Calu3 (cell line): ENCODE measurements at regions of chr5 and their contacts with region 1.

Region 1: DNA sequence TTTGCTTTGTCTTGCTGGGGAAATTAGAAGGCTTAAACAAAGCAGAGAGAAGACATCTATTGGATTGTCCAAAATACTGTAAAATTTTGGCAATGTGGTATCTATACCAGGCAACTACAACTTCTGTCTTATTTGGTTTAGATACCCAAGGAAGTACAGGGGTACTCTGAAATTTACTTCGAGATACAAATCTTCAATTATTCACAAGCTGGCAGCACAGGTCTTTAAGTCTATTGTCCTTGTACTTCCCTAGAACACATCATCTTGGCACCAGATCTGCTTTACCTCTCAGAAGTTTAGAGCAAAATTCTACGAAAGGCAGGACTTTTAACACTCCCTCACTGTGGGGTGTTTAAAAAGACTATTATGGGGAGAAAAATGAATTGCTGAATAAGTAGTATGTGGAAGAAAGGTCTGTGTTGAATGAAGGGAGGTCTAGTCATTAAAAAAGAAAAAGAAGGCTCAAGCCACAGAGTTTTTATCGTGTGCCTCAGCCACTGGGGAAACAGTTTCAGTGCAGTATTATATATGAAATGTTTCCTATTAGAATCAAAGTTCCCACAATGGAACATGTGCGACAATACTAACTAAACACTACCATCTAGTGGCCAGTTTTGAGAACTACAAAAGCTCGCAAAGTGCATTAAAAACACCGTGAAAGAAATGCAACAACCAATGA is 93.7 kb downstream of the PDE4D start:
- DNase-seq: peak; percentile 46
- H3K4me3 Mint-ChIP-seq: no peak overlapping the region
- H3K27ac Mint-ChIP-seq: no peak overlapping the region
- H3K4me1 Mint-ChIP-seq: no peaks in the 10 kb centered on the region
- H3K27me3 Mint-ChIP-seq: no peaks in the 10 kb centered on the region
- CTCF ChIP-seq: peak; percentile 72

Region 2: GRCh38 chr5:59193616-59194319 is 606.0 kb before region 1 on chr5:
- CTCF ChIA-PET with region 1: interaction called, 3 read pairs
- intact Hi-C with region 1: loop called (anchors 5 kb)
- DNase-seq: peak; percentile 58
- H3K4me3 Mint-ChIP-seq: no peak overlapping the region
- H3K27ac Mint-ChIP-seq: peak overlapping the region; percentile 78
- H3K4me1 Mint-ChIP-seq: peaks cover 12% of the 10 kb centered on the region
- H3K27me3 Mint-ChIP-seq: no peaks in the 10 kb centered on the region
- CTCF ChIP-seq: no peak

Region 3: GRCh38 chr5:59506285-59506877 is 293.4 kb before region 1 on chr5:
- CTCF ChIA-PET with region 1: no interaction called
- intact Hi-C with region 1: loop called (anchors 1 kb)
- DNase-seq: no peak
- H3K4me3 Mint-ChIP-seq: no peak overlapping the region
- H3K27ac Mint-ChIP-seq: no peak overlapping the region
- H3K4me1 Mint-ChIP-seq: no peaks in the 10 kb centered on the region
- H3K27me3 Mint-ChIP-seq: no peaks in the 10 kb centered on the region
- CTCF ChIP-seq: peak; percentile 34

Region 4: DNA sequence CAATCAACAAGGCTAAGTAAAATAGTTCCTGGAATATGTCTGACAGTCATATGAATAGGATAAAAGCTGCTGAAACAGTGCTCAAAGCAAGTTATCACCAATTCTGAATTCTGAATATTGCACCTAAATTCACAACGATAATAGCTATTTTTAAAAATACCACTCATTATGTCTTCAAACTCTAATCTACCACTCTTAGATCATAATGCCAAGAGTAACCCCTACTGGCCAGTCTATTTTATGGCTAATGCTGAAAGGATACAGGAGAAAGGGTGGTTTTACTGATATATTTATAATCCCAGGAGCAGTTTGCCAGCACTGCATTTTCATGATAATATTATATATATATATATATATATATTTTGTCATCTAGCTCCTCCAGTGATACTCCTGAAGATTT is 139.1 kb before region 1 on chr5:
- CTCF ChIA-PET with region 1: interaction called, 5 read pairs
- intact Hi-C with region 1: loop called (anchors 5 kb)
- DNase-seq: peak; percentile 11
- H3K4me3 Mint-ChIP-seq: no peak overlapping the region
- H3K27ac Mint-ChIP-seq: no peak overlapping the region
- H3K4me1 Mint-ChIP-seq: peaks cover 28% of the 10 kb centered on the region
- H3K27me3 Mint-ChIP-seq: no peaks in the 10 kb centered on the region
- CTCF ChIP-seq: peak; percentile 17

Region 5: GRCh38 chr5:59724482-59725391 is 75.1 kb before region 1 on chr5:
- CTCF ChIA-PET with region 1: no interaction called
- intact Hi-C with region 1: loop called (anchors 1 kb)
- DNase-seq: peak; percentile 68
- H3K4me3 Mint-ChIP-seq: no peak overlapping the region
- H3K27ac Mint-ChIP-seq: no peak overlapping the region
- H3K4me1 Mint-ChIP-seq: peaks cover 8% of the 10 kb centered on the region
- H3K27me3 Mint-ChIP-seq: no peaks in the 10 kb centered on the region
- CTCF ChIP-seq: peak; percentile 76

Region 6: DNA sequence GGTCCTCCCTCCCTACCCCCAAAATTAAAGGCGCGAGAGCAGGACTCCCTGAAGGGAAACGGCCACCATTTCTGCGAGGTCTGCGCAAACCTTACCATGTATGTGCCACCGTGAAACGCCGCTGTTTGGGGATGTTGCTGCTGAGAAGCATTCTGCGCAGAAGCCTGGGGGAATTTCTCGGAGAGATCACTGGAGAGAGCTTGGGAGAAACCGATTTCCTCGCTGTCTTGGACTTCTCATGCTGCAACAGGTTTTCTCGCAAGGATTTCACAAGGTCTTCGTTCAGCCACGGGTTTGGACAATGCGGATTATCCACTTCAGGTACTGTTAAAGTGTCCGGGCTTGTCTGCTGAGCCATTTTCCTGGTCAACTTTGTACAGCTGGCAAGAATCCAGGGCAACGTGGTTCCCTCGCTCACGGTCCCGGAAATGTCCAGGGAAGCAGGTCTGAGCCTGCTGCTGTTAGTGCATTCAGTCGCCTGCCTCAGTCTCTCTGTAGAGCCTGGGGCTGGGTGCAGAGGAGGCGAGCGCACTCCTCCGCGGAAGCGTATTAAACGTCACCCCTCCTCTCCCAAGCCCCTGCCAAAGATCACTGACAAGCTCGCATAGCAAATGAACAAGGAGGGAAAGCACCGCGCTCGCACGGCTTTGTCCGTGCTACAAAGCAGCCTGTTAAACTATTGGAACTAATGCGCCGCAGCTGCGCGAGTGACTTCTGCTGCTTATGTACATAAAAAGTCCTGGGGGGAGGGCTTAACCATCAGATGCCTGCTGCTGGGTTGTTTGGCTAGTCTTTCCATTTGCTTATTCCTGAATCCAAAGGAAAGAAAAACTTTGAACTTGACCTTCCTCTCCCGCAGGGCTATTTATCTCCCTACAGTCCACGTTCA is 31.4 kb before region 1 on chr5:
- CTCF ChIA-PET with region 1: no interaction called
- intact Hi-C with region 1: loop called (anchors 1 kb)
- DNase-seq: peak; percentile 58
- H3K4me3 Mint-ChIP-seq: peak overlapping the region; percentile 97
- H3K27ac Mint-ChIP-seq: peak overlapping the region; percentile 87
- H3K4me1 Mint-ChIP-seq: peaks cover 65% of the 10 kb centered on the region
- H3K27me3 Mint-ChIP-seq: no peaks in the 10 kb centered on the region
- CTCF ChIP-seq: no peak

Region 7: GRCh38 chr5:59840200-59840601 is 40.4 kb after region 1 on chr5:
- CTCF ChIA-PET with region 1: no interaction called
- intact Hi-C with region 1: no loop called
- DNase-seq: no peak
- H3K4me3 Mint-ChIP-seq: no peak overlapping the region
- H3K27ac Mint-ChIP-seq: no peak overlapping the region
- H3K4me1 Mint-ChIP-seq: peaks cover 20% of the 10 kb centered on the region
- H3K27me3 Mint-ChIP-seq: peaks cover 10% of the 10 kb centered on the region
- CTCF ChIP-seq: no peak